B cell (primary cell): ENCODE measurements at regions of chr18 and their contacts with region 1.

Region 1: GRCh38 chr18:77000527-77000926 is 132.1 kb downstream of the MBP start:
- DNase-seq: peak; percentile 70
- ATAC-seq: peak; percentile 57
- H3K4me3 ChIP-seq: no peak overlapping the region
- H3K4me3 Mint-ChIP-seq: no peak overlapping the region
- H3K27ac ChIP-seq: no peak overlapping the region
- H3K27ac Mint-ChIP-seq: peak overlapping the region; percentile 61
- H3K4me1 ChIP-seq: peaks cover 12 to 19% of the 10 kb centered on the region in 2 donors
- H3K4me1 Mint-ChIP-seq: peaks cover 22% of the 10 kb centered on the region
- H3K27me3 ChIP-seq: peaks cover 0 to 2% (median 0%) of the 10 kb centered on the region in 4 experiments
- H3K27me3 Mint-ChIP-seq: no peaks in the 10 kb centered on the region
- CTCF ChIP-seq: peak; percentile 99

Region 2: DNA sequence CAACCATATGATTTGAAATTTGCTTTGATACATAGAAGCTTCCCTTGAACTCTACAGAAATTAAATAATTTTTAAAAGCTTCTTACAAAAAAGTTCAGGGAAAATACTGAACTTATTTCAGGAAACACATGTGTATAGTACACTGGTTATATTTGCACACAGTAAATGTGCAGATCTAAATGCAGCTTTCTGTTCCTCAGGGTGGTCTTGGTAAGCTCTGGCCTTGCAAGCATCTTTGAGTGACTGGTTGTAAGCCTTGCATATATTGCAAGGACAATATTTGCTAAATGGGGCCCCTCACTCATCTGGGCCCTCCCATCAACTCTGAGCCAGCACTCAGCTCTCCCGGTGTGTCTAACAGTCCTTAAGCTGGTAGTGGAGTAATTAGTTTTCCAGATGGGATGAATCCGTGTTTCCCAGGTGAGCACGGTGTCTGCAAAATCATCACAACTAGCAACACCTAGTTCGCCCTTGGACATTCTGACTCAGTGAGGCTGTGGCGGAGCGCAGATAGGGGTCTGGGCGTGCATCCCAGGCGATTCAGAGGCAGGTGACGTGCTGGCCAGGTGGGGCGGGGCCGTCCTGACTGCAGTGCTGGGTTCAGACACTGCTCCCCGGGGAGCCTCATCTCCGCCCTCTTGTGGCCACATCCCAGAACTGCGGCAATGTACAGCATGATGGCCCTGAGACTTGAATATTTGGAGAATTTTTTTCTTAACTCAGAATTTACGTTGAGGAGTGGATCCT is 17.5 kb before region 1 on chr18:
- CTCF ChIA-PET with region 1: interaction called, 83 read pairs
- POLR2A ChIA-PET with region 1: no interaction called
- intact Hi-C with region 1: no loop called
- DNase-seq: peak; percentile 89
- ATAC-seq: peak; percentile 62
- H3K4me3 ChIP-seq: no peak overlapping the region
- H3K4me3 Mint-ChIP-seq: peak overlapping the region; percentile 77
- H3K27ac ChIP-seq: peak overlapping the region in 1 of 2 donors; percentile 9
- H3K27ac Mint-ChIP-seq: peak overlapping the region; percentile 90
- H3K4me1 ChIP-seq: peaks cover 51 to 57% of the 10 kb centered on the region in 2 donors
- H3K4me1 Mint-ChIP-seq: peaks cover 55% of the 10 kb centered on the region
- H3K27me3 ChIP-seq: no peaks in the 10 kb centered on the region
- H3K27me3 Mint-ChIP-seq: no peaks in the 10 kb centered on the region
- CTCF ChIP-seq: peak; percentile 90

Region 3: GRCh38 chr18:77054606-77055428 is 54.3 kb after region 1 on chr18:
- CTCF ChIA-PET with region 1: interaction called, 70 read pairs
- POLR2A ChIA-PET with region 1: no interaction called
- intact Hi-C with region 1: loop called (anchors 1 kb)
- DNase-seq: peak; percentile 91
- ATAC-seq: peak; percentile 69
- H3K4me3 ChIP-seq: peak overlapping the region; percentile 32 to 41 (median 38)
- H3K4me3 Mint-ChIP-seq: peak overlapping the region; percentile 89
- H3K27ac ChIP-seq: peak overlapping the region; percentile 92 to 96
- H3K27ac Mint-ChIP-seq: peak overlapping the region; percentile 96
- H3K4me1 ChIP-seq: peaks cover 56 to 61% of the 10 kb centered on the region in 2 donors
- H3K4me1 Mint-ChIP-seq: peaks cover 68% of the 10 kb centered on the region
- H3K27me3 ChIP-seq: no peaks in the 10 kb centered on the region
- H3K27me3 Mint-ChIP-seq: no peaks in the 10 kb centered on the region
- CTCF ChIP-seq: peak; percentile 64

Region 4: DNA sequence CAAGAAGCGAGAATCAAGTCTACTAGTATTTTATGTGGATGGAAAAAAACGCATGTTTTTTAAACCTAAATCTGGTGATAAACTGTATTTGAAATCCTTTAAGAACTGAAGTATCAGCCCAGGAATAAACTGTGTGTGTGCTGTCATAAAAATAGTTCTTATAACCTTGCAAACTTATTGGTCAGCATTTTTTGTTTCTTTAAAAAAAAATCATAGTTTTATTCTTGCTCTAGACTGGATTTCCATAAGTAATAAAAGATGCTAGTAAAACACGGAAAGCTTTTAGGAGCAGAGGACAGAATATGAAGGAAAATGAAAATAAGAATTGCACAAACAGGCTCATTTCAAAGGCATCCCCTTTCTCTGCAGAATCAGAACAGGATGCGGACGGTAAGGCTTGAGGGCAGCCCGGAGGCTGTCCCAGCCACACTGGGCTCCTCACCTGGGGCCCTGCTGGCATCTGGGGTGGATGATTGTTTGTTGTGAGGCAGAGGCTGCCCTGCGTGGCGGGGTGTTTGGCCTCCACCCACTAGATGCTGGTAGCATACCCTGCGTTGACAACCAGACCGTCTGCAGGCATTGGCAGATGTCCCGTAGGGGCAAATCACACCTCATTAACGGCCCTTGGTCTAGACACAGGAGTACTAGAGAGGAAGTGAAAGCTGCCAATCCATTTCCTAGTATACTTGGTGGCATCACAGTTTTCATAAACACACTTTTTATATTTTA is 79.6 kb after region 1 on chr18:
- CTCF ChIA-PET with region 1: interaction called, 10 read pairs
- POLR2A ChIA-PET with region 1: no interaction called
- intact Hi-C with region 1: no loop called
- DNase-seq: peak; percentile 91
- ATAC-seq: peak; percentile 98
- H3K4me3 ChIP-seq: peak overlapping the region in 1 of 5 experiments; percentile 38
- H3K4me3 Mint-ChIP-seq: peak overlapping the region; percentile 70
- H3K27ac ChIP-seq: peak overlapping the region in 1 of 2 donors; percentile 87
- H3K27ac Mint-ChIP-seq: peak overlapping the region; percentile 94
- H3K4me1 ChIP-seq: peaks cover 18 to 27% of the 10 kb centered on the region in 2 donors
- H3K4me1 Mint-ChIP-seq: peaks cover 66% of the 10 kb centered on the region
- H3K27me3 ChIP-seq: no peaks in the 10 kb centered on the region
- H3K27me3 Mint-ChIP-seq: no peaks in the 10 kb centered on the region
- CTCF ChIP-seq: no peak

Region 5: DNA sequence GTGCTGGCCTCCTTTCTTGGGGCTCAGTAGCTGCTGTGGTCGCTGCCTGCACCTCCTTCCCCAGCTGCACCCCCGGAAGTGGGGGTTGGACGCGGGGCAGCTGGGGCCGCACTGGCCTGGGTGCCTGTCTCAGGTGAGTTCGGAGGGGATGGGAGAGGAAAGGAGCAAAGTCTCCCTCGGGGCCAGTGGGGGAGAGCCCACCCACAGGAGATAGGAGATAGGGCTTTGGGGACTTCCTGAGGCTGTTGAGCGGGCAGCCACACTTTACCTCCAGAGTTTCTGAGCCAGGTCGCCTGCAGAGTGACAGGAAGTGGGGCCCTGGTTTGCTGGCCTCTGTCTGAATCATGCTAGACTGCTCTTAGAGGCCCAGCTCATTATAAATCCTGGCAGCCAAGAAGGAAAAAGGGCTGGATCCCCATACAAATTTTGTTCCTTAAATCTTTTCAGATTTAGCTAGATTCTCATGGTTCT is 124.0 kb after region 1 on chr18:
- CTCF ChIA-PET with region 1: interaction called, 10 read pairs
- POLR2A ChIA-PET with region 1: no interaction called
- intact Hi-C with region 1: no loop called
- DNase-seq: peak; percentile 51
- ATAC-seq: peak; percentile 38
- H3K4me3 ChIP-seq: peak overlapping the region in 3 of 5 experiments; percentile 5 to 45 (median 14)
- H3K4me3 Mint-ChIP-seq: peak overlapping the region; percentile 72
- H3K27ac ChIP-seq: peak overlapping the region; percentile 60 to 80
- H3K27ac Mint-ChIP-seq: peak overlapping the region; percentile 62
- H3K4me1 ChIP-seq: peaks cover 64 to 66% of the 10 kb centered on the region in 2 donors
- H3K4me1 Mint-ChIP-seq: peaks cover 91% of the 10 kb centered on the region
- H3K27me3 ChIP-seq: no peaks in the 10 kb centered on the region
- H3K27me3 Mint-ChIP-seq: no peaks in the 10 kb centered on the region
- CTCF ChIP-seq: no peak